Activated CD4-positive, alpha-beta T cell treated with anti-CD3 and anti-CD28 coated beads, Interleukin-2, amount 10 ng/mL, durations not matched to agents 7 days and 5 days (primary cell): ENCODE measurements at regions of chr1 and their contacts with region 1.

Region 1: DNA sequence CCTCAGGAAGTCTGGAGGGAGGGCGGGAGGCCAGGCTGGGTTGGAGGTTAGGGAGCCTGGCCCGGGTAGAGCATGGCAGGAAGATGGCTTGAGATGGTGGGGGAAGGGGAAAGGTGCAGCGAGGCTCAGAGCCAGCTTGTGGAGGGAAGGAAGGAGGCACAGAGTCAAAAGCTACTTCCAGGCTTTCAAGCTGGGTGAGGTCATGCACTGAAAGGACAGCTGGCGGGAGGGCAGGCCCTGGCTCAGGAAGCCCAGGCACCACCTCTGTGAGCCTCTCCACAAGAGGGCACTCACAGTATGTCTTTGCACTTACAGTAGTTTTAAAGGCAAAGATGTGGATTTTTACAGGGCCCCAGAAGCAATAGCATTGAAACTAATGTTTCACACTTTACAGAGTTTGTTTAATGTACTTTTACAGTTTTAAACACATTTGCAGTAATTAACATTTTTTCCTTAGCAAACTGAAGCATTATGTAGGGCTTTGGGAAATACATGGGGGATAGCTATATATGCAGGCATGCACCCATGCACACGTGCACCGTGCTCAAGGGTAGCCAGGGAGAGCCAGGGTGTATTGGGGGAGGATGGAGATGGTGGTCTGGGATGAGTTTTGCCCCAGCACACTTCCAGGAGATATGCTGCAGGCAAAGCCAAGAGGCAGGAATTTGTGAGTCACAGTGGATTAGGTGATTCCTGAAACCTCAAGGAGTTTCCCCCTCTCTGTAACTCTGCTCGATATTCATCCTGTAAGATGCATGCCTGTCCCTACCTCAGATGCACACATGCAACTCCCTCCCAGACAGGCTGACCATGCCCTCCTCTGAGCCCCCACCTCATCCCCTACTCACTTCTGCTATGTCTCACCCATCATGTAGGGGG is 6.1 kb upstream of the ADAM15 start:
- DNase-seq: peak; percentile 78
- H3K4me3 Mint-ChIP-seq: no peak overlapping the region
- H3K27ac Mint-ChIP-seq: peak overlapping the region; percentile 60
- H3K4me1 Mint-ChIP-seq: peaks cover 16% of the 10 kb centered on the region
- H3K27me3 Mint-ChIP-seq: peaks cover 2% of the 10 kb centered on the region

Region 2: GRCh38 chr1:155030243-155030795 is 14.7 kb before region 1 on chr1:
- CTCF ChIA-PET with region 1: interaction called, 222 read pairs
- POLR2A ChIA-PET with region 1: no interaction called
- DNase-seq: no peak
- H3K4me3 Mint-ChIP-seq: no peak overlapping the region
- H3K27ac Mint-ChIP-seq: no peak overlapping the region
- H3K4me1 Mint-ChIP-seq: no peaks in the 10 kb centered on the region
- H3K27me3 Mint-ChIP-seq: peaks cover 3% of the 10 kb centered on the region

Region 3: GRCh38 chr1:155158979-155159378 is 113.9 kb after region 1 on chr1:
- CTCF ChIA-PET with region 1: no interaction called
- POLR2A ChIA-PET with region 1: no interaction called
- DNase-seq: no peak
- H3K4me3 Mint-ChIP-seq: no peak overlapping the region
- H3K27ac Mint-ChIP-seq: no peak overlapping the region
- H3K4me1 Mint-ChIP-seq: no peaks in the 10 kb centered on the region
- H3K27me3 Mint-ChIP-seq: peaks cover 15% of the 10 kb centered on the region